ENCODE measurements at regions of chr18 and their contacts with region 1.

Region 1: GRCh38 chr18:80157708-80158343 is 48.8 kb downstream of the ADNP2 start:
- DNase-seq: peak; percentile 70
- H3K4me3 ChIP-seq: no peak overlapping the region
- H3K27ac ChIP-seq: no peak overlapping the region
- H3K4me1 ChIP-seq: no peaks in the 10 kb centered on the region
- H3K27me3 ChIP-seq: no peaks in the 10 kb centered on the region
- CTCF ChIP-seq: peak; percentile 88 to 90
- POLR2A ChIP-seq: no peak

Region 2: GRCh38 chr18:80002468-80002867 is 155.4 kb before region 1 on chr18:
- CTCF ChIA-PET with region 1: no interaction called
- POLR2A ChIA-PET with region 1: no interaction called
- dilution Hi-C with region 1: no loop called
- intact Hi-C with region 1: no loop called
- DNase-seq: no peak
- H3K4me3 ChIP-seq: no peak overlapping the region
- H3K27ac ChIP-seq: no peak overlapping the region
- H3K4me1 ChIP-seq: no peaks in the 10 kb centered on the region
- H3K27me3 ChIP-seq: no peaks in the 10 kb centered on the region
- CTCF ChIP-seq: no peak
- POLR2A ChIP-seq: no peak

Region 3: GRCh38 chr18:80034068-80034851 is 123.6 kb before region 1 on chr18 and contains the start of gene RBFA:
- CTCF ChIA-PET with region 1: interaction called, 9 read pairs
- POLR2A ChIA-PET with region 1: no interaction called
- dilution Hi-C with region 1: no loop called
- intact Hi-C with region 1: loop called (anchors 5 kb)
- DNase-seq: peak; percentile 99
- H3K4me3 ChIP-seq: peak within 1 kb of the TSS; percentile 94 to 97 (median 96)
- H3K27ac ChIP-seq: peak within 1 kb of the TSS; percentile 39
- H3K4me1 ChIP-seq: peaks cover 9% of the 10 kb centered on the region
- H3K27me3 ChIP-seq: no peaks in the 10 kb centered on the region
- CTCF ChIP-seq: peak; percentile 32 to 49
- POLR2A ChIP-seq: peak; percentile 85
- total RNA-seq, gene RBFA: 30.5 and 34.8 TPM in 2 replicates

Region 4: GRCh38 chr18:80108728-80109675 is 48.8 kb before region 1 on chr18 and contains the start of gene ADNP2:
- CTCF ChIA-PET with region 1: interaction called, 10 read pairs
- POLR2A ChIA-PET with region 1: no interaction called
- dilution Hi-C with region 1: no loop called
- intact Hi-C with region 1: no loop called
- DNase-seq: peak; percentile 97
- H3K4me3 ChIP-seq: peak within 1 kb of the TSS; percentile 58 to 94 (median 86)
- H3K27ac ChIP-seq: peak within 1 kb of the TSS; percentile 54
- H3K4me1 ChIP-seq: peaks cover 8% of the 10 kb centered on the region
- H3K27me3 ChIP-seq: peaks cover 0 to 6% of the 10 kb centered on the region in 2 experiments
- CTCF ChIP-seq: no peak
- POLR2A ChIP-seq: no peak
- total RNA-seq, gene ADNP2: 19.8 and 20.6 TPM in 2 replicates

Region 5: DNA sequence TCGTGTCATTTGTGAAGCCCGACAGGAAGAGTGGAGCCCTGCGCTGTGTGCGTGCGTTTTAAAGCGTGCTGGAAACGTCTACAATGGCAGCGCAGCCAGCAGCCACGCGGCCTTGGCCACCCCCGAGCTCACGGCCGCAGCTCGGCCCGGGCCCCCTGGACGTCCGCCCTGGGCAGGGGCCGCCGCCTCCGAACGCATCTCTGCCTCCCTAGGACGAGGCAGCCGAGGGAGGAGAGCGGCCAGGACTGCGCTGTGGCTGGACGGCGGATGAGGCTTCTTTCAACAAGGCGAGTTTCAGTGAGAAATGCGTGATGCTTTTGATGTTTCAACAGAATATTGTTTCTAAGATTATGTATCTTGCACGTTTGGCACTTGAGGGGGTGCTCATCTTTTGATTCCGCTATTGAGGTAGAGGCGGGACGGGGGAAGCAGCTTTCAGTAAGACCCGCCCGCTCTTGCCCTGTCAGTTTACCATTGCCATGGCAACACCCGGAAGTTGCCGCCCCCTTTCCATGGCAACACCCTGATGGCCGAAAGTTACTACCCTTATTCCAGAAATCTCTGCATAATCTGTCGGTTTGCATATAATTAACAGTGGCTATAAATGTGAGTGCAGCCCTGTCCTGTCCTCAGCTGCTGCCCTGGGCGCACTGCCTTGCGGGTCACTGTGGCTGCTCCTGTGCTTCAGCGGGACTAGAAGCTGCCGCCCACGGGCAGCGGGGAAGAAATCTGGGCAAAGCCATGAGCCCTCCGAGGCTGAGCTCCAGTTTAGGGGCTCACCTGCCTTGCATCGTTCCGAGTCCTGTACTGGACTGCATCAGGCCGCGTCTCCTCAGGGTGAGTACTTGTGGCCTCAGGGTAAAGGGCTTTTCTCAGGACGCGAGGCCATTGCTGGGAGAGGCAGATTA is 10.2 kb before region 1 on chr18:
- CTCF ChIA-PET with region 1: interaction called, 53 read pairs
- POLR2A ChIA-PET with region 1: no interaction called
- dilution Hi-C with region 1: no loop called
- intact Hi-C with region 1: no loop called
- DNase-seq: peak; percentile 76
- H3K4me3 ChIP-seq: peak overlapping the region; percentile 59 to 79 (median 69)
- H3K27ac ChIP-seq: no peak overlapping the region
- H3K4me1 ChIP-seq: peaks cover 8% of the 10 kb centered on the region
- H3K27me3 ChIP-seq: no peaks in the 10 kb centered on the region
- CTCF ChIP-seq: no peak
- POLR2A ChIP-seq: no peak

Region 6: DNA sequence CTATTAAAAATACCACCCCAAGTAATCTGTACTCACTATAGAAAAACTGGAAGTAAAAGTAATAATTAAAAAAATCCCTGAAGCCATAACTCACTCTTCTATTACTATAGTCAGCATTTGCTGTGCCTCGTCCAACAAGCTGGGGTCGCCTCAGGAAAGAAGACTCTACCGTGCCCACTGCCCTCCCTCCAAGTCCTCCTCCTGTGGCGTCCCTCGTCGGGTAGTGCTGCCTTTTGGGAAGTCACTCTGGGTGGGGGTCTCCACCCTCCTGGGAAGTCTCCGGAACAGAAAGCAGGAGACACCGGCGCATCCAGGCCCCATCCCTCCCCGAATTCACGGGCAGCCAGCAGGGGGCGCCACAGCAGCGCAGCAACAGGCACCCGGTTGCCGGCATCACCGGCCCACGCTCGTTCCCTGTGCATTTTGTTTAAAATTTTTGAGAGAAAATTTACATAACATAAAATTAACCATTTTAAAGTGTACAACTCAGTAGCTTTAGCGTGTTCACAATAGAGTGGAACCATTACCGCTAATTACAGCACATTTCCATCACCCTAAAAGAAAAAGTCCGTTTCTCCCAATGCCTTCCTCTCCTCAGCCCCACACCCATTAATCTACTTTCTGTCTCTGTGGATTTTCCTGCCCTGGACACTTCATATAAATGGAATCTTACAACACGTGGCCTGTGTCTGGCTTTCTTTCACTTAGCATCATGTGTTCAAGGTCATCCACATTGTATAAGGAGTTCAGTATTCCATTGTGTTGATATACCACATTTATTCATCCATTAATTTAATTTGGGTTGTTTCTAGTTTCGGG is 13.4 kb after region 1 on chr18:
- CTCF ChIA-PET with region 1: interaction called, 53 read pairs
- POLR2A ChIA-PET with region 1: no interaction called
- dilution Hi-C with region 1: no loop called
- intact Hi-C with region 1: no loop called
- DNase-seq: peak; percentile 12
- H3K4me3 ChIP-seq: no peak overlapping the region
- H3K27ac ChIP-seq: no peak overlapping the region
- H3K4me1 ChIP-seq: no peaks in the 10 kb centered on the region
- H3K27me3 ChIP-seq: no peaks in the 10 kb centered on the region
- CTCF ChIP-seq: peak; percentile 88 to 92
- POLR2A ChIP-seq: no peak

Region 7: DNA sequence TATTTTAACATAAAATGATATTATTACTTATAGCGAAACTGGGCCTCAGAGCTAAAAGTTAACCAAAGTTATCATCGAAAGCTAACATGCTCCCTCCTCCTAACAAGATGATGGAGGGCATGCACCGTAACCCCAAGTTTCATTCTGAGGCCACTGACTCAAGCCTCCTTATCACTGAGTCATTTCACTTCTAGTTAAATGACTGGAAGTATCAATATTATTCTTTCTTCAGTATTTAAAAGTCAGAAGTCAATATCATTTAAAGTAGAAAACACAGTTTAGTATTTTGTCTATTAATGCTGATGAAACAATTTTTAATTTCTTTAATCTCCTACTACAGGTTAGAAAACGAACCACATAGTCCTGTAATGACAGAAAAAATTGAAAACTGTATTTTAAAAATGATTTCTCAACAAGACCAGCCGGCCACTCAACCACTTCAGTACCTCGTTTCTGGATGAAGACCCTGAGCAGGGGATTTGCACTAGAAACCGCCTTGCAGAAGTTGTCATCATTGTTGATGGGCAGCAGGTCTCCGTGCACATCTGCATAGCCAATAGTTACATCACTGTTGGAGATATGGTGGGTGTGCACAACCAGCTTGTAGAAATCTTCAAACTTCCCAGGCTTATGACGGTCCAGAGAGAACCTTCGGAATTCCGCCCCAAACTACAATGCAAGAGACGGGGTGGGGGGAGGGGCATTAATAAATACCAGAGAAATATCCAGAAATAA is 44.6 kb after region 1 on chr18:
- CTCF ChIA-PET with region 1: no interaction called
- POLR2A ChIA-PET with region 1: no interaction called
- dilution Hi-C with region 1: no loop called
- intact Hi-C with region 1: no loop called
- DNase-seq: no peak
- H3K4me3 ChIP-seq: no peak overlapping the region
- H3K27ac ChIP-seq: no peak overlapping the region
- H3K4me1 ChIP-seq: no peaks in the 10 kb centered on the region
- H3K27me3 ChIP-seq: peaks cover 0 to 6% of the 10 kb centered on the region in 2 experiments
- CTCF ChIP-seq: no peak
- POLR2A ChIP-seq: no peak

Region 8: GRCh38 chr18:80253871-80254492 is 96.2 kb after region 1 on chr18:
- CTCF ChIA-PET with region 1: interaction called, 63 read pairs
- POLR2A ChIA-PET with region 1: no interaction called
- dilution Hi-C with region 1: no loop called
- intact Hi-C with region 1: loop called (anchors 1 kb)
- DNase-seq: no peak
- H3K4me3 ChIP-seq: no peak overlapping the region
- H3K27ac ChIP-seq: no peak overlapping the region
- H3K4me1 ChIP-seq: no peaks in the 10 kb centered on the region
- H3K27me3 ChIP-seq: peaks cover 7 to 8% of the 10 kb centered on the region in 2 experiments
- CTCF ChIP-seq: no peak
- POLR2A ChIP-seq: no peak